Thyroid gland (tissue), 4 donors: ENCODE measurements at regions of chr6 and their contacts with region 1.

Region 1: GRCh38 chr6:47631269-47631772 is 67.1 kb upstream of the ADGRF4 start:
- DNase-seq: no peak
- H3K4me3 ChIP-seq: no peak overlapping the region
- H3K27ac ChIP-seq: no peak overlapping the region
- H3K4me1 ChIP-seq: no peaks in the 10 kb centered on the region
- H3K27me3 ChIP-seq: no peaks in the 10 kb centered on the region
- CTCF ChIP-seq: peak in 4 of 6 experiments; percentile 32 to 70 (median 55)
- POLR2A ChIP-seq: no peak

Region 2: DNA sequence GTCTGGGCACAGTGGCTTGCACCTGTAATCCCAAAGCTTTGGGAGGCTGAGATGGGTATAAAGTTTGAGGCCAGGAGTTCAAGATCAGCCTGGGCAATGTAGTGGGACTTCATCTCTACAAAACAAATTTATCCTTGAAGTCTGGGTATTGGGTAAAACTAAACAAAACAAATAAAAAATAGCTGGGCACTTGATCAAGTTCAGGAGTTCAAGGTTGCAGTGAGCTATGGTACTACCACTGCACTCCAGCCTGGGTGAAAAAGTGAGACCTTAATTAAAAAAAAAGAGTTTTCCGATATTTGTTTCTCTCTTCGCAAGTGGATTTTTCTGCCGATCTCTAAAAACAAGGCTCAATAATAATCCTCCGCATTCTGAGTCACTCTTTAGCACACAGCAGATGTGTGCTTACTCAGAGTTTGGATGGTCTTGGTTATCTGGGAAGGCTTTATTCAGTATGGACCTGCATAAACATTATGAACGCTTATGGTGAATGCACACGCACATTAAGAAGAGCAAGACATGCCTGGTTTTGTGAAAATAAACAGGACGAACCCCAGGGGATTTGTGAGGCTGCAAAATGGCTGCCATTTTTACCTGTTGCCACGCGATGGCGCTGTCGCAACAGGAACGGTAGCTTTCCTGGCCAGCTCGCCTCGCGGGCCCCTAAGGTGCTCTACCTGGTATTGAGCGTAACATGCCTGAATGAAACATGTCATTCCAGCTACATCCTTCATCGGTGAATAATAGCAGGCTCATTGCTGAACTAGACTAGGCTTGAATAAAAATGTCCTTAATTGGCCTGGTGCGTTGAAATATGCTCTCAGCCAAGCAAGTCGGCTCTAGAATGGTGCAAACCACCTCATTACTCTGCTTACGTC is 156.5 kb after region 1 on chr6:
- intact Hi-C with region 1: loop called (anchors 10 kb)
- DNase-seq: peak; percentile 64 to 74
- H3K4me3 ChIP-seq: no peak overlapping the region
- H3K27ac ChIP-seq: no peak overlapping the region
- H3K4me1 ChIP-seq: no peaks in the 10 kb centered on the region
- H3K27me3 ChIP-seq: no peaks in the 10 kb centered on the region
- CTCF ChIP-seq: peak; percentile 65 to 88 (median 84)
- POLR2A ChIP-seq: no peak